ENCODE measurements at regions of chr1 and their contacts with region 1.

Region 1: DNA sequence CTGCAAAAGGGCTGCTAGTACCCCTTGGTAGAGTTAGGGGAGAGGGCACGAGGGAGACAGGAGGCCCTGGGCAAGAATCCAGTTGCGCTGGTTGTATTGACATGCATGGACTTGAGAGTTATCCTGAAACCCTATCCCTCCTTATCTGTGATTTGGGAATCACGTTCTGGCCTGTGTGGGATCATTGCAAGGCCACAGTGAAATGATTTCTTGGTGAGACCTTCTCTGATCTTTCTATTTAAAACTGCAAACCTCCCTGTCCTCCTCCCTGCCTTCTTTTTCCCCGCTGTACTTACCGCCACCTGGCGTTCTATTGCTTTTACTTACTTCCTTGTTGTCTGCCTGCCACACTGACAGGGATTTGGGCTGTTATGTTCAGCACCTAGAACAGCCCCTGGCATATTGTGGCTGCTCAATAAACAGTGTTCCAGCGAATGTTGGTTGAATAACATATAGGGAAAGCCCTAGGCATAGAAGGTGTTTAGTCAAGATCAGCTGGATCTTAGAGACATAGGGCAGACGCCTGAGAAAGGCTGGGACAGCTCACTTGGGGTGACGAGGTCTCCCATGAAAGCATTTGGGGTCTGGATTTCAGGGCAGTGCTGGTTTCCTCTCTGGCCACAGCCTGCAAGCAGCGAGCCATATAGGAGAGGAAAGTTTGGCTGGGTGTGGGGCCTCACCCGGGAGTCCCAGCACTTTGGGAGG is 25.6 kb downstream of the ALPL start:
- DNase-seq: peak; percentile 52
- ATAC-seq: peak; percentile 77
- H3K4me3 Mint-ChIP-seq: no peak overlapping the region
- H3K27ac Mint-ChIP-seq: no peak overlapping the region; the same call in 1 of the 2 replicates
- H3K4me1 Mint-ChIP-seq: peaks cover 45% of the 10 kb centered on the region
- H3K27me3 Mint-ChIP-seq: no peaks in the 10 kb centered on the region
- CTCF ChIP-seq: no peak

Region 2: DNA sequence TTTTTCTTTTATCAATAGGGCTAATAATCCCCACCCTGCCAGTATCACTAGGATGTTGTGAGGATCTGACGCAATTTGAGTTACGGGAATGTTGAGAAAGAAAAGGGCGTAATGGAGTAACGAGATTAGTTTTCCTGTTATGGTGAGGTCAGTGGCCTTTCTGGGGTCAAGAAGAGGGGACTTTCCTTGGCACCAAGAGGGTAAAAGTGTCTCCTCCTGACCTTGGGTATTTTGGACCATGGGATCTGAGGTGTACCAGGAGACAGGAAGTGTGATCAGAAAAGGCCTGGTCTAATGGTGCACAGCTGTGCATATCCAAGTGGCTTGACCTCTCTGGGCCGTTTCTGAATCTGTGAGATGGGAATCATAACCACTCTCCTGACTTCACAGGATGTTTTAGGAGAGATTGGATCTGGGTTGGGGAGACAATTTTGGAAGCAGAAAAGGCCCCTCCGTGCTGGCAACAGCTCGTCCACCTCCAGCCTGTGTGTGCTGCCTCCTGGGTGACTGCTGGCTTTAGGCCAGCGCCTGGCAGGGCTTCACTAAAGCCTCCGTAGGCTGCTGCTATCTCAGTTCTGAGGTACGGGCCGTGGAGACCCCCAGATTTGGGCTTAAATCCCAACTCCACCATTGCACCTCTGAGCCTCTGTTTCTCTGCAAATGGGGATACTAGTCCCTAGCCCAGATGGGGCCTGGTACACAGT is 11.4 kb after region 1 on chr1:
- CTCF ChIA-PET with region 1: interaction called, 12 read pairs
- POLR2A ChIA-PET with region 1: no interaction called
- DNase-seq: no peak
- ATAC-seq: no peak
- H3K4me3 Mint-ChIP-seq: no peak overlapping the region
- H3K27ac Mint-ChIP-seq: no peak overlapping the region
- H3K4me1 Mint-ChIP-seq: peaks cover 25% of the 10 kb centered on the region
- H3K27me3 Mint-ChIP-seq: no peaks in the 10 kb centered on the region
- CTCF ChIP-seq: no peak